CD4-positive, alpha-beta memory T cell (primary cell): ENCODE measurements at regions of chr1 and their contacts with region 1.

Region 1: DNA sequence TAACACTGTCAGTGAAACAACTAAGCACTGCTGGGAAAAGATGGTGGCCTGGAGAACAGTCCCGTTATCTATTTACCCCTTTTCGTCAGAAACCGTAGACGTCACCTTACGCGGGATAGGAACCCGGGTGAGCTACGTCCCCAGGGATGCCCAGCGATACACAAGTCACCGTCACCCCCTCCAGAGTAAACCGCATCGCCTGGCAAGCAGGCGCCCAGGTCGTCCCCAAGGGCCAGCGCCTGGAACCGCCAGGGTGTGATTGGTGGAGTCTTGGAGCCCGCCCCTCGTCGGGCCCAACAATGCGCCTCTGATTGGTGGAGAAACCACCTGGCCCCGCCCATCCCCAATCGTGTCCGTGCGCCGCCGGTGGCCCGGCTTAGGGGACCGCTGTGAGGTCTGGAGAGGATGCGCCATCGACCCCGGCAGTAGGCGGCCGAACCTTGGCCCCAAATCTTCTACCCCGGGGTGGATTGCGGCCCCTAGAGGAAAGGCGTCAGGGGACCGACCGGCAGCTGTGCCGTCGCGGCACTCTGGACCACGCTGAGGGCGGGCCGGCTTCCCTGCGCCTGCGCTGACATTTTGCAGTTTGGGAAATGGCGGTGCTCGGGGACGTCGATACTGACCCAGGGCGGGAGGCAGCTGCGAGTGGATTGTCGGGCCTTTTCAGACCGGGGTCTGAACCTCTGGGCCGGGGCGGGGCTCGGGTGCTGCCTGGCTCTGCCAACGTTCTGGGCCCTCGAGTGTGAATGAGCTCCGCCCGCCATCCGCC is 34.4 kb downstream of the SLC2A1 start:
- DNase-seq: peak; percentile 89 to 94 (median 90)
- H3K4me3 ChIP-seq: peak overlapping the region; percentile 83 to 85
- H3K4me3 Mint-ChIP-seq: peak overlapping the region; percentile 82 to 97 (median 94)
- H3K27ac ChIP-seq: peak overlapping the region; percentile 72
- H3K27ac Mint-ChIP-seq: peak overlapping the region; percentile 89 to 98 (median 95)
- H3K4me1 ChIP-seq: peaks cover 19% of the 10 kb centered on the region
- H3K4me1 Mint-ChIP-seq: peaks cover 27 to 45% (median 35%) of the 10 kb centered on the region in 4 donors
- H3K27me3 ChIP-seq: no peaks in the 10 kb centered on the region
- H3K27me3 Mint-ChIP-seq: no peaks in the 10 kb centered on the region

Region 2: GRCh38 chr1:42777852-42778251 is 146.4 kb before region 1 on chr1:
- CTCF ChIA-PET with region 1: interaction called, 11 read pairs
- POLR2A ChIA-PET with region 1: no interaction called
- intact Hi-C with region 1: no loop called
- DNase-seq: peak in 2 of 5 donors; percentile 19 to 28
- H3K4me3 ChIP-seq: no peak overlapping the region
- H3K4me3 Mint-ChIP-seq: no peak overlapping the region
- H3K27ac ChIP-seq: no peak overlapping the region
- H3K27ac Mint-ChIP-seq: peak overlapping the region in 3 of 7 donors; percentile 7 to 29 (median 24)
- H3K4me1 ChIP-seq: no peaks in the 10 kb centered on the region
- H3K4me1 Mint-ChIP-seq: peaks cover 4 to 14% (median 11%) of the 10 kb centered on the region in 4 donors
- H3K27me3 ChIP-seq: no peaks in the 10 kb centered on the region
- H3K27me3 Mint-ChIP-seq: no peaks in the 10 kb centered on the region

Region 3: DNA sequence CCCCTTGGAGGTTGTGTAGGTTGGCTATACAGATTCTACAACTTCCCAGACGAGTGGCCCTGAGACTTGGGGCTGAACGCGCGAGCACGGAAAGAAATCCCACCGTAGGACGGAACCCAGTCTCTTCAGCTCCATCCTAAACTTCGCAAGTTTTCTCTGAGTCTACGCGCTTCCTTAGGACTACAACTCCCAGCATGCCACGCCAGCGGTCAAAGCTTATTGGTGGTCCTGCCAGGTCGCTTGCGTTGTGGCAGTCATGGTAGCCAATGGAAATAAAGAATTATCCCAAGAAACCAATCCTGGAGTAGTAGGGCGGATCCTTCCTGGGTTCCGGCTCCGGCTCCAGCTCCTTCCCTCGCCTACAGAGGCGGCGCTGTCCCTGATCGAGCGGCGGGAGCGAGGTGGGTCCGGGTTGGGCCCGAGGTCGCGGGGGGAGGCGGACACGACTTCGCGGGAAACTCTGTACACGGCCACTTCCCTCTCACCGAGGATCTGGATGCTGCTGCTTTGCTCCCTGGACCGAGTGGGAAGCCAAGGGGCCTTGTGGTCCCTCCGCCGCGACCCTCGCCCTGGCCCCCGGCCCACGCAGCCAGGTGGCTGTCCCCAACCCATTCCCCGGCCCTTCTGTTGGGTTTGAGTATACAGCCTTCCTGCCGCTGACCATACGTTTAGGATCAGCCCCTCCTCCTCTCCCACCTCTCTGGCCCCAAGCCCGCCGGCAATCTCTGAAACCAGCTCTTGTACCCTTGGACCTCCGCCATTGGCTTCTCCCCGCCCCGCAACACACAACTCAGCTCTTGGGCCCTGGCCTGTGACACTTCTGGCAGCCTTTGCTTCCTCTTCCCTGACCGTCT is 77.8 kb before region 1 on chr1 and contains the start of gene ZNF691:
- CTCF ChIA-PET with region 1: no interaction called
- POLR2A ChIA-PET with region 1: interaction called, 7 read pairs
- intact Hi-C with region 1: loop called (anchors 5 kb)
- DNase-seq: peak; percentile 88 to 94 (median 89)
- H3K4me3 ChIP-seq: peak within 1 kb of the TSS; percentile 74 to 84
- H3K4me3 Mint-ChIP-seq: peak within 1 kb of the TSS; percentile 91 to 98 (median 96)
- H3K27ac ChIP-seq: peak within 1 kb of the TSS; percentile 72
- H3K27ac Mint-ChIP-seq: peak within 1 kb of the TSS; percentile 59 to 95 (median 86)
- H3K4me1 ChIP-seq: peaks cover 23% of the 10 kb centered on the region
- H3K4me1 Mint-ChIP-seq: peaks cover 27 to 38% (median 35%) of the 10 kb centered on the region in 4 donors
- H3K27me3 ChIP-seq: no peaks in the 10 kb centered on the region
- H3K27me3 Mint-ChIP-seq: no peaks in the 10 kb centered on the region
- total RNA-seq, gene ZNF691: 17.3 to 18.8 TPM

Region 4: DNA sequence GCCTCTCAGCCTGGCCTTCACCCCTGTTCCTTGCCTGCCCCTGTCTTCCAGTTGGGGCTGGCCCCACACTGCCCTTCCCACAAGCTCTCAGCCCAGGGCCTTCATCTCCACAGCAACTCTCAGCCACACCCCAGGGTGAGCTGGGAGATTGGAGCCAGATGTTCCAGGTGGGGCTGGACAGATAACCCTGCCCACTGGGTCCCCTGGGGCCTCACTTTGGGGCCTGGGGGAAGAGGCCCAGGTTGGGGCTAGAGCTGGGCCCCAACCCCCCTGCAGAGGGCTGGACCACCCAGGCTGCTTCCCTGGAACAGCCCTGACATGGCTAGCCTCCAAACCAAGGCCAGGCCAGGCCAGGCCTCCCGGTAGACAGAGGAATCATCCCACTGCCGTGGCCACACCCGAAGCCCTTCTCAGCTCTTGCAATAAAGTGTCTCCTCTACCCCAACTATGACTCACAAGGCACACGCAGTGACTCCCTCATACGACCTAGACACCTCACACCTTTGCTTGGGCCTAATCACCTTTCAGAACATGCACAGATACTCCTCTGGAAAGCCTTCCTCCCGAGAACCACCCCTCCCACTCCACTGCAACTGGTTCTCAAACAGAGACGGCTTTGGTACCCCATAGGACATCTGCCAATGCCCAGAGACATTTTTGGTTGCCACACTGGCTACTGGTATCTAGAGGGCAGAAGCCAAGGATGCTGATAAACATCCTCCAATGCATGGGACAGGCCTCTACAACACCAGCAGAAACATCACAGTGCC is 12.2 kb after region 1 on chr1:
- CTCF ChIA-PET with region 1: interaction called, 10 read pairs
- POLR2A ChIA-PET with region 1: interaction called, 24 read pairs
- intact Hi-C with region 1: loop called (anchors 1 kb)
- DNase-seq: peak in 1 of 5 donors; percentile 78
- H3K4me3 ChIP-seq: no peak overlapping the region
- H3K4me3 Mint-ChIP-seq: peak overlapping the region in 7 of 8 donors; percentile 15 to 68 (median 51)
- H3K27ac ChIP-seq: peak overlapping the region; percentile 59
- H3K27ac Mint-ChIP-seq: peak overlapping the region; percentile 83 to 96 (median 95)
- H3K4me1 ChIP-seq: peaks cover 98% of the 10 kb centered on the region
- H3K4me1 Mint-ChIP-seq: peaks cover 77 to 99% (median 91%) of the 10 kb centered on the region in 4 donors
- H3K27me3 ChIP-seq: no peaks in the 10 kb centered on the region
- H3K27me3 Mint-ChIP-seq: no peaks in the 10 kb centered on the region

Region 5: DNA sequence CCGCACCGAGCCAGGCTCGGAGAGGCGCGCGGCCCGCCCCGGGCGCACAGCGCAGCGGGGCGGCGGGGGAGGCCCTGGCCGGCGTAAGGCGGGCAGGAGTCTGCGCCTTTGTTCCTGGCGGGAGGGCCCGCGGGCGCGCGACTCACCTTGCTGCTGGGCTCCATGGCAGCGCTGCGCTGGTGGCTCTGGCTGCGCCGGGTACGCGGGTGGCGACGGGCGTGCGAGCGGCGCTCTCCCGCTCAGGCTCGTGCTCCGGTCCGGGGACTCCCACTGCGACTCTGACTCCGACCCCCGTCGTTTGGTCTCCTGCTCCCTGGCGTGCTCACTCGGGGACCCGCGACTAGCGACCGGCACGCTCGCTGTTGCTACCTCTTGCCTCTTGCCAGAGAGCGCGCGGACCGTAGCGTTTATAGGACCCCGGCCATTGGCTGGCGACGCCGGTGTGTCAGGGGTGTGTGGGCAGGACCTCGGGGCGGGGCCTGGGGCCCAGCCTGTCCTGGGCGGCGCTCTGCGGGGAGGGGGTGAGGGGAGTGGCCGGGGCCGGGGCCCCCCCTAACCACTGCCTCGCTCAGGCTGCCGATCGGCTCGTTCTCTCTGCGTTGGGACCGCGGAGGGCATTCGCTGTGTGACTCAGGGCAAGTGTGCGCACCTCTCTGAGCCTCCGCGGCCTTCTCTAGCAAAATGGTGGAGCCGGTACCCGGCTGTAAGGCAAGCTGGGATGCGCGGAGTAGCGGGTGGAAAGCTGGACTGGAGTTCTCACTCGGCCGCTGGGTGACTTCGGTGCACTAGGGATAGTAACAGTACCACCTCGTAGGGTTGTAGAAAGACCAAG is 34.4 kb after region 1 on chr1 and contains the start of gene SLC2A1:
- CTCF ChIA-PET with region 1: interaction called, 42 read pairs
- POLR2A ChIA-PET with region 1: interaction called, 102 read pairs
- intact Hi-C with region 1: loop called (anchors 1 kb)
- DNase-seq: peak; percentile 92 to 97 (median 95)
- H3K4me3 ChIP-seq: peak within 1 kb of the TSS; percentile 66 to 78
- H3K4me3 Mint-ChIP-seq: peak within 1 kb of the TSS; percentile 97 to 99 (median 98)
- H3K27ac ChIP-seq: peak within 1 kb of the TSS; percentile 76
- H3K27ac Mint-ChIP-seq: peak within 1 kb of the TSS; percentile 97 to 99 (median 98)
- H3K4me1 ChIP-seq: peaks cover 59% of the 10 kb centered on the region
- H3K4me1 Mint-ChIP-seq: peaks cover 35 to 79% (median 51%) of the 10 kb centered on the region in 4 donors
- H3K27me3 ChIP-seq: no peaks in the 10 kb centered on the region
- H3K27me3 Mint-ChIP-seq: no peaks in the 10 kb centered on the region
- total RNA-seq, gene SLC2A1: 57.5 to 58.4 TPM

Region 6: GRCh38 chr1:43073490-43074230 is 149.4 kb after region 1 on chr1:
- CTCF ChIA-PET with region 1: interaction called, 864 read pairs
- POLR2A ChIA-PET with region 1: interaction called, 56 read pairs
- intact Hi-C with region 1: loop called (anchors 1 kb)
- DNase-seq: peak; percentile 66 to 76 (median 72)
- H3K4me3 ChIP-seq: no peak overlapping the region
- H3K4me3 Mint-ChIP-seq: no peak overlapping the region
- H3K27ac ChIP-seq: no peak overlapping the region
- H3K27ac Mint-ChIP-seq: peak overlapping the region in 3 of 7 donors; percentile 35 to 72 (median 70)
- H3K4me1 ChIP-seq: peaks cover 4% of the 10 kb centered on the region
- H3K4me1 Mint-ChIP-seq: peaks cover 2 to 9% (median 4%) of the 10 kb centered on the region in 4 donors
- H3K27me3 ChIP-seq: no peaks in the 10 kb centered on the region
- H3K27me3 Mint-ChIP-seq: no peaks in the 10 kb centered on the region